A673 (cell line): ENCODE measurements at regions of chr5 and their contacts with region 1.

Region 1: DNA sequence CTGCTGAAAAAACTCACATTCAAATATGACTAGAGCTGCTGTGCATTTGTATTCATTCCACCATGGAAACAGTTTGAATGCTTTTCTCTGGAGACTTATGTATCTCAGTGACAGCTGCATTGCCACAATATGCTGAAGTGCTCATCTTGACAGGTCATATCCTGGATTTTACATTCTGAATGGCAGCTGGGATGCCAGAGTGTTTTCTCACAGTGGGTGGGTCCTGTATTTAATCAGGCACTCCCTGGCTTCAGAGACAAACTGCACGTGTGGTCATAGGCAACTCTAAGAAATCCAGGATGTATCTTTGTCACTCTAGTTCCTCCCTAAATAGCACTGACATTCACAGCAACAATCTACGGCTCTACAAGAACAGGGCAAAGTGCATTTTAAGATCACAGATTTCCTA is 75.6 kb downstream of the ST8SIA4 start:
- DNase-seq: peak; percentile 96
- H3K4me3 ChIP-seq: no peak overlapping the region
- H3K27ac ChIP-seq: no peak overlapping the region
- H3K4me1 ChIP-seq: peaks cover 23% of the 10 kb centered on the region
- H3K27me3 ChIP-seq: peaks cover 6% of the 10 kb centered on the region
- CTCF ChIP-seq: no peak

Region 2: DNA sequence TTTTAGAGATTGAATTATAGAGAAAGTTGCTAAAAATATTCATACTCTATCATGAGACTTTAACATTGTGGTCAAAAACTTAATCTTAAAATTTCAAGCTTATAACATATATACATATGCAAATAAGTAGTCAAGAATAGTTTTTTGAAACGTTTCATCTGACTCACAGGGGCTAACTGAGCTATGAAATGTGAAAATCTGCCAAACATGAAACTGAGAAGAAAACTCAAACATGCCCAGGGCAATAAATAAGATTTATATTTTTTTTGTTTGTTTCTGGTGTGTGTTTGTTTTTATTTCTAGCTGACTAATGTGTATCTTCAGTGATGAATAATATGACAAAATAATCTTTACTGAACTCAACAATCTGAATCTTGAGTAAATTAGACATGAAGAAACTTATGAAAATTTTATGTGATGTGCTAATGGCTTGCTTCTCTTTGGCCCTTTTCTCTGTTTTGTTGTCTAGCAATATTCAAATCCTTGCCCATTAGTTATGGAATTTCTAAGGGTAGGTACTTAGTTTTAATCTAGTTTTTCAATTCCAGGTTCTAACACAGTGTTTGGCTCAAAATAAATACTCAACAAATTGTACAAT is 192.4 kb before region 1 on chr5:
- CTCF ChIA-PET with region 1: no interaction called
- POLR2A ChIA-PET with region 1: no interaction called
- intact Hi-C with region 1: no loop called
- DNase-seq: no peak
- H3K4me3 ChIP-seq: no peak overlapping the region
- H3K27ac ChIP-seq: no peak overlapping the region
- H3K4me1 ChIP-seq: no peaks in the 10 kb centered on the region
- H3K27me3 ChIP-seq: no peaks in the 10 kb centered on the region
- CTCF ChIP-seq: no peak

Region 3: GRCh38 chr5:100840384-100840783 is 12.9 kb after region 1 on chr5:
- CTCF ChIA-PET with region 1: no interaction called
- POLR2A ChIA-PET with region 1: no interaction called
- intact Hi-C with region 1: loop called (anchors 2 kb)
- DNase-seq: peak; percentile 77
- H3K4me3 ChIP-seq: no peak overlapping the region
- H3K27ac ChIP-seq: no peak overlapping the region
- H3K4me1 ChIP-seq: peaks cover 27% of the 10 kb centered on the region
- H3K27me3 ChIP-seq: peaks cover 28% of the 10 kb centered on the region
- CTCF ChIP-seq: no peak

Region 4: DNA sequence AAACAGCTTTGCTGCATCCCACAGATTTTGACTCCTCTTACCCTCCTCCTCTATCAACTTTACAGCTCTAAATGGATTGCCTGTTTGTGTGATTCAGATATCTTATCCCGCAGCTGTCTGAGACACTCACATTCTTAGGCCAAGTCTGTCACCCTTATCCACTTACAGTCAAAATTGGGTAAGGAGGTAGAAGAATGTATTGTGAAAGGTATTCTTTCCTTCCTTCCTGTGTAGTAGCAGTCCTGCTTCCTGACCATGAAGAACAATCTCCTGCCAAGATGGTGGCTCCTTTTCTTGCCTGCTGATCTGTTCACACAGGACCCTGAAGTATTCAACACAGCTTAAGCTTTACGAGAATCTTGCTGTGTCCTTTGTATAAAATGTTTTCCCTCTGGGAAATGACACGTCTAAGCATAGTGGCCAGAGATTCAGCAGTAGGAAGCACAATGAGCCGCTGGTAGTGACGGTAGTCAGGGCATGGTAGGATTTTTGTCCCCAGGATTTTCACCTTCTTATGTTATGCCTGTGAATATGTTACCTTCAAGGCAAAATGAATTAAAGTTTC is 143.3 kb after region 1 on chr5:
- CTCF ChIA-PET with region 1: no interaction called
- POLR2A ChIA-PET with region 1: no interaction called
- intact Hi-C with region 1: no loop called
- DNase-seq: no peak
- H3K4me3 ChIP-seq: no peak overlapping the region
- H3K27ac ChIP-seq: no peak overlapping the region
- H3K4me1 ChIP-seq: no peaks in the 10 kb centered on the region
- H3K27me3 ChIP-seq: peaks cover 4% of the 10 kb centered on the region
- CTCF ChIP-seq: no peak